IMR-90 (cell line): ENCODE measurements at regions of chr6 and their contacts with region 1.

Region 1: DNA sequence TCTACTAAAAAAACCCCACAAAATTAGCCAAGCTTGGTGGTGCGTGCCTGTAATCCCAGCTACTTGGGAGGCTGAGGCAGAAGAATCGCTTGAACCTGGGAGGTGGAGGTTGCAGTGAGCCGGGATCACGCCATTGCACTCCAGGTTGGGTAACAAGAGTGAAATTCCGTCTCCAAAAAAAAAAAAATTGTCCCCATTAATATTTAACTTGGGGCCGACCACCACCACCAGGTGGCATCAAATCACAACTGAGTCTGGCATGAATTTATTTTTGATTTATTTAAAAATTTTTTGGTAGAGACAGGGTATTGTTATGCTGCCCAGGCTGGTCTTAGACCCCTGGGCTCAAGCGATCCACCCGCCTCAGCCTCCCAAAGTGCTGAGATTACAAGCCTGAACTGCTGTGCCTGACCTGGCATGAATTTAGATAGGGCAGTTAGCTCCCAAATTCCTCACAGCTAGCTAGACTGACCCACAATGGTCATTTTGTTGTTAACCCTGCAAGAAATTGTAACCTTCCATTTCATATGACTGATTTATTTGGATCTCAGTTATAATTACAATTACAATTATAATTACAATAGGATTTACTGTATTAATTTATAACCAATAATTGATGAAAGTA is 17.1 kb upstream of the BEND3 start:
- DNase-seq: no peak
- ATAC-seq: peak; percentile 56
- H3K4me3 ChIP-seq: no peak overlapping the region
- H3K27ac ChIP-seq: no peak overlapping the region
- H3K4me1 ChIP-seq: no peaks in the 10 kb centered on the region
- H3K27me3 ChIP-seq: no peaks in the 10 kb centered on the region
- CTCF ChIP-seq: peak; percentile 61
- POLR2A ChIP-seq: no peak
- RAD21 ChIP-seq: peak; percentile 59

Region 2: GRCh38 chr6:107093644-107094043 is 38.8 kb before region 1 on chr6:
- CTCF ChIA-PET with region 1: no interaction called
- POLR2A ChIA-PET with region 1: no interaction called
- dilution Hi-C with region 1: no loop called
- in situ Hi-C with region 1: no loop called
- intact Hi-C with region 1: no loop called
- DNase-seq: no peak
- ATAC-seq: no peak
- H3K4me3 ChIP-seq: no peak overlapping the region
- H3K27ac ChIP-seq: no peak overlapping the region
- H3K4me1 ChIP-seq: no peaks in the 10 kb centered on the region
- H3K27me3 ChIP-seq: no peaks in the 10 kb centered on the region
- CTCF ChIP-seq: no peak
- POLR2A ChIP-seq: no peak
- RAD21 ChIP-seq: no peak

Region 3: DNA sequence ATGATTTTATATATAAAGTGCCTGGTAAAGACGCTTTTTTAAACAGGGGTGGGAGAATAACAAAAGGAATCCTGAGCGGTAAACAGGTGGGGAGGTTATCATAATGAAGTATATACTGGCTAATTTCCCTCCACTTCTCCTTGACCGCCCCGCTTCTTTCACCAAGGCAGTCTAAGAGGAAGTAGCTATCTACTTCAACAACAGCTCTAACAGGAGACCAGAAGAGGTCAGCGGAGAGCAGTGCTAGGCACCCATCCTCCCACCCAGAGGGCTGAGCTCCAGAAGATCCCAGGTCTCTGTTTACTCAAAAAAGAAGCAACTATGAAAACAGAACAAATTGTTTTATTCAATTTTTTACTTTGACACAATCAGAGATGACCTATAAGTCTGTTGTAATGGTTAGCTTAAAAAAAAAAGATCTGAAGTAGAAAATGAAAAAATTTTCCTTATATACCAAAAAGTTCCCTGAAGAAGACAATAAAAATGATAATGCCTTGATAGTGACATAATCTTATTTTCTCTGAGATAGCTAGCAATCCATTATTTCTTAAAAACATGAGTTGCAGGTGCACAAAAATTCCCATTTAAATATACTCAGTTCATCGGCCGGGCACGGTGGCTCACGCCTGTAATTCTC is 185.8 kb after region 1 on chr6:
- CTCF ChIA-PET with region 1: no interaction called
- POLR2A ChIA-PET with region 1: no interaction called
- dilution Hi-C with region 1: no loop called
- in situ Hi-C with region 1: no loop called
- intact Hi-C with region 1: loop called (anchors 10 kb)
- DNase-seq: peak; percentile 63
- ATAC-seq: peak; percentile 99
- H3K4me3 ChIP-seq: no peak overlapping the region
- H3K27ac ChIP-seq: no peak overlapping the region
- H3K4me1 ChIP-seq: peaks cover 1% of the 10 kb centered on the region; the same call in 1 of the 2 replicates
- H3K27me3 ChIP-seq: no peaks in the 10 kb centered on the region
- CTCF ChIP-seq: peak; percentile 72
- POLR2A ChIP-seq: no peak
- RAD21 ChIP-seq: peak; percentile 77

Region 4: GRCh38 chr6:107396211-107396610 is 263.8 kb after region 1 on chr6:
- CTCF ChIA-PET with region 1: no interaction called
- POLR2A ChIA-PET with region 1: no interaction called
- dilution Hi-C with region 1: no loop called
- in situ Hi-C with region 1: no loop called
- intact Hi-C with region 1: no loop called
- DNase-seq: no peak
- ATAC-seq: no peak
- H3K4me3 ChIP-seq: no peak overlapping the region
- H3K27ac ChIP-seq: no peak overlapping the region
- H3K4me1 ChIP-seq: no peaks in the 10 kb centered on the region
- H3K27me3 ChIP-seq: no peaks in the 10 kb centered on the region
- CTCF ChIP-seq: no peak
- POLR2A ChIP-seq: no peak
- RAD21 ChIP-seq: no peak

Region 5: GRCh38 chr6:107459283-107460082 is 327.0 kb after region 1 on chr6 and contains the start of gene PDSS2:
- CTCF ChIA-PET with region 1: interaction called, 5 read pairs
- POLR2A ChIA-PET with region 1: no interaction called
- dilution Hi-C with region 1: no loop called
- in situ Hi-C with region 1: no loop called
- intact Hi-C with region 1: loop called (anchors 5 kb)
- DNase-seq: peak; percentile 95
- ATAC-seq: peak; percentile 99
- H3K4me3 ChIP-seq: peak within 1 kb of the TSS; percentile 85
- H3K27ac ChIP-seq: peak within 1 kb of the TSS; percentile 76
- H3K4me1 ChIP-seq: 0 out of 2 replicates have a peak, but pooled peaks cover 2% of the 10 kb centered on the region
- H3K27me3 ChIP-seq: no peaks in the 10 kb centered on the region
- CTCF ChIP-seq: peak; percentile 63
- POLR2A ChIP-seq: peak; percentile 58; the same call in 1 of the 2 replicates
- RAD21 ChIP-seq: peak; percentile 50
- total RNA-seq, gene PDSS2: 8.6 and 8.9 TPM in 2 replicates

Region 6: GRCh38 chr6:107657755-107658461 is 525.5 kb after region 1 on chr6:
- CTCF ChIA-PET with region 1: no interaction called
- POLR2A ChIA-PET with region 1: no interaction called
- dilution Hi-C with region 1: no loop called
- in situ Hi-C with region 1: no loop called
- intact Hi-C with region 1: loop called (anchors 5 kb)
- DNase-seq: peak; percentile 86
- ATAC-seq: peak; percentile 90
- H3K4me3 ChIP-seq: peak overlapping the region; percentile 4; the same call in 1 of the 2 replicates
- H3K27ac ChIP-seq: peak overlapping the region; percentile 79
- H3K4me1 ChIP-seq: peaks cover 27% of the 10 kb centered on the region
- H3K27me3 ChIP-seq: no peaks in the 10 kb centered on the region
- CTCF ChIP-seq: peak; percentile 48
- POLR2A ChIP-seq: no peak
- RAD21 ChIP-seq: peak; percentile 43

Region 7: GRCh38 chr6:107704347-107705013 is 572.0 kb after region 1 on chr6:
- CTCF ChIA-PET with region 1: no interaction called
- POLR2A ChIA-PET with region 1: no interaction called
- dilution Hi-C with region 1: no loop called
- in situ Hi-C with region 1: no loop called
- intact Hi-C with region 1: loop called (anchors 10 kb)
- DNase-seq: peak; percentile 68
- ATAC-seq: peak; percentile 89
- H3K4me3 ChIP-seq: no peak overlapping the region
- H3K27ac ChIP-seq: no peak overlapping the region
- H3K4me1 ChIP-seq: no peaks in the 10 kb centered on the region
- H3K27me3 ChIP-seq: 0 out of 2 replicates have a peak, but pooled peaks cover 4% of the 10 kb centered on the region
- CTCF ChIP-seq: peak; percentile 82
- POLR2A ChIP-seq: no peak
- RAD21 ChIP-seq: peak; percentile 78

Region 8: GRCh38 chr6:107800564-107801164 is 668.2 kb after region 1 on chr6:
- CTCF ChIA-PET with region 1: no interaction called
- POLR2A ChIA-PET with region 1: no interaction called
- dilution Hi-C with region 1: no loop called
- in situ Hi-C with region 1: no loop called
- intact Hi-C with region 1: no loop called
- DNase-seq: no peak
- ATAC-seq: no peak
- H3K4me3 ChIP-seq: no peak overlapping the region
- H3K27ac ChIP-seq: no peak overlapping the region
- H3K4me1 ChIP-seq: no peaks in the 10 kb centered on the region
- H3K27me3 ChIP-seq: peaks cover 2% of the 10 kb centered on the region
- CTCF ChIP-seq: 0 out of 2 replicates have a peak, but pooled peaks have one; percentile 27
- POLR2A ChIP-seq: no peak
- RAD21 ChIP-seq: no peak

Region 9: GRCh38 chr6:107847844-107848802 is 715.7 kb after region 1 on chr6:
- CTCF ChIA-PET with region 1: no interaction called
- POLR2A ChIA-PET with region 1: no interaction called
- dilution Hi-C with region 1: no loop called
- in situ Hi-C with region 1: no loop called
- intact Hi-C with region 1: loop called (anchors 5 kb)
- DNase-seq: peak; percentile 63
- ATAC-seq: peak; percentile 100
- H3K4me3 ChIP-seq: peak overlapping the region; percentile 47
- H3K27ac ChIP-seq: no peak overlapping the region
- H3K4me1 ChIP-seq: no peaks in the 10 kb centered on the region
- H3K27me3 ChIP-seq: peaks cover 7% of the 10 kb centered on the region
- CTCF ChIP-seq: peak; percentile 93
- POLR2A ChIP-seq: no peak
- RAD21 ChIP-seq: peak; percentile 79